ENCODE measurements at regions of chr22 and their contacts with region 1.

Region 1: DNA sequence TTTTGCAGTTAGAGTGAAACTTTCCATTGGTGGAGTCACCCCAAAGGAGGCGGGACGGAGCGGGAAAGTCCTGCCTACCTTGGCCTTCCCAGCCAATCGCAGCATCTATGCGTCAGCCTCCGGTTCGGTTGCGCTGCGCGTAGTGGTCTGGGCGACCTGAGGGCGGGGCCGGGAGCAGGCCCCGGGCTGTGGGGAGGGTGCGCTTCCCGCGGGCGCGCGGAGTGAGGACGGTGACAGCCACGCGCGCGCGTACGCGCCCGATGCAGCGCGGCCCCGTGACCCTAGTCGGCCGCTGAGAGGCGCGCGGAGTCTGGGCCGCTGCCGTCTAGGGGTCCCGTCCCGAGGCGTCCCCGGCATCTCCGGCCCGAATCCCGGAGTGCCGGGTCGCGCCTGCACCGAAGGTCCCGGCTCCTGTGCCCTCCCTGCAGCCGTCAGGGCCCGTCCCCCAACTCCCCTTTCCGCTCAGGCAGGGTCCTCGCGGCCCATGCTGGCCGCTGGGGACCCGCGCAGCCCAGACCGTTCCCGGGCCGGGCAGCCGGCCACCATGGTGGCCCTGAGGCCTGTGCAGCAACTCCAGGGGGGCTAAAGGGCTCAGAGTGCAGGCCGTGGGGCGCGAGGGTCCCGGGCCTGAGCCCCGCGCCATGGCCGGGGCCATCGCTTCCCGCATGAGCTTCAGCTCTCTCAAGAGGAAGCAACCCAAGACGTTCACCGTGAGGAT is at the start of gene NF2:
- DNase-seq: peak; percentile 99
- H3K4me3 Mint-ChIP-seq: peak within 1 kb of the TSS; percentile 85
- H3K27ac Mint-ChIP-seq: peak within 1 kb of the TSS; percentile 95
- H3K4me1 Mint-ChIP-seq: peaks cover 18% of the 10 kb centered on the region
- H3K27me3 Mint-ChIP-seq: no peaks in the 10 kb centered on the region
- total RNA-seq, gene NF2: 40.4 to 44.2 TPM

Region 2: GRCh38 chr22:29580200-29580810 is 23.2 kb before region 1 on chr22:
- CTCF ChIA-PET with region 1: no interaction called
- POLR2A ChIA-PET with region 1: no interaction called
- intact Hi-C with region 1: loop called (anchors 1 kb)
- DNase-seq: peak; percentile 20
- H3K4me3 Mint-ChIP-seq: peak overlapping the region; percentile 85
- H3K27ac Mint-ChIP-seq: peak overlapping the region; percentile 82
- H3K4me1 Mint-ChIP-seq: peaks cover 13% of the 10 kb centered on the region
- H3K27me3 Mint-ChIP-seq: no peaks in the 10 kb centered on the region

Region 3: GRCh38 chr22:29617922-29618629 is 14.6 kb after region 1 on chr22:
- CTCF ChIA-PET with region 1: interaction called, 22 read pairs
- POLR2A ChIA-PET with region 1: interaction called, 12 read pairs
- intact Hi-C with region 1: loop called (anchors 1 kb)
- DNase-seq: no peak
- H3K4me3 Mint-ChIP-seq: no peak overlapping the region
- H3K27ac Mint-ChIP-seq: peak overlapping the region; percentile 35
- H3K4me1 Mint-ChIP-seq: peaks cover 34% of the 10 kb centered on the region
- H3K27me3 Mint-ChIP-seq: no peaks in the 10 kb centered on the region

Region 4: GRCh38 chr22:29837780-29838598 is 234.5 kb after region 1 on chr22 and contains the start of gene ASCC2:
- CTCF ChIA-PET with region 1: no interaction called
- POLR2A ChIA-PET with region 1: no interaction called
- intact Hi-C with region 1: loop called (anchors 10 kb)
- DNase-seq: peak; percentile 100
- H3K4me3 Mint-ChIP-seq: peak within 1 kb of the TSS; percentile 91
- H3K27ac Mint-ChIP-seq: peak within 1 kb of the TSS; percentile 95
- H3K4me1 Mint-ChIP-seq: peaks cover 38% of the 10 kb centered on the region
- H3K27me3 Mint-ChIP-seq: no peaks in the 10 kb centered on the region
- total RNA-seq, gene ASCC2: 55.5 to 56.8 TPM

Region 5: DNA sequence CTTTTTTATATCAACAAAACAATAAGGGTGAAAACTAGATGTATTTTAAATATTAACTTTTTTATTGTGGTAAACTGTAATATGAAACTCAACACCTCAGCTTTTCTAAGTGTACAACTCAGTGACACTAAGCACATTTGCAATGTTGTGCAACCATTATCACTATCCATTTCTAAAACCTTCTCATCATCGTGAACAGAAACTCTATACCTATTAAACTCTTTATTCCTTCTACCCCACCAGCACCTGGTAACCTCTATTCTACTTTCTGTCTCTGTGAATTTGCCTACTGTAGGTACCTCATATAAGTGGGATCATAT is 486.1 kb after region 1 on chr22:
- CTCF ChIA-PET with region 1: no interaction called
- POLR2A ChIA-PET with region 1: no interaction called
- intact Hi-C with region 1: loop called (anchors 1 kb)
- DNase-seq: no peak
- H3K4me3 Mint-ChIP-seq: no peak overlapping the region
- H3K27ac Mint-ChIP-seq: no peak overlapping the region
- H3K4me1 Mint-ChIP-seq: peaks cover 7% of the 10 kb centered on the region
- H3K27me3 Mint-ChIP-seq: no peaks in the 10 kb centered on the region